ENCODE measurements at regions of chr15 and their contacts with region 1.

Region 1: GRCh38 chr15:38707802-38708671 is 143.4 kb upstream of the RASGRP1 start:
- DNase-seq: peak; percentile 80
- ATAC-seq: peak; percentile 93
- H3K4me3 ChIP-seq: no peak overlapping the region
- H3K27ac ChIP-seq: peak overlapping the region; percentile 74; the same call in 1 of the 2 replicates
- H3K4me1 ChIP-seq: peaks cover 7% of the 10 kb centered on the region
- H3K27me3 ChIP-seq: no peaks in the 10 kb centered on the region
- CTCF ChIP-seq: peak; percentile 82
- POLR2A ChIP-seq: no peak; the same call in 1 of the 2 replicates
- RAD21 ChIP-seq: peak; percentile 95

Region 2: GRCh38 chr15:38743147-38743546 is 35.1 kb after region 1 on chr15:
- CTCF ChIA-PET with region 1: no interaction called
- POLR2A ChIA-PET with region 1: no interaction called
- dilution Hi-C with region 1: no loop called
- in situ Hi-C with region 1: no loop called
- intact Hi-C with region 1: no loop called
- DNase-seq: no peak
- ATAC-seq: no peak
- H3K4me3 ChIP-seq: no peak overlapping the region
- H3K27ac ChIP-seq: no peak overlapping the region
- H3K4me1 ChIP-seq: peaks cover 5% of the 10 kb centered on the region
- H3K27me3 ChIP-seq: no peaks in the 10 kb centered on the region
- CTCF ChIP-seq: no peak
- POLR2A ChIP-seq: no peak
- RAD21 ChIP-seq: no peak

Region 3: DNA sequence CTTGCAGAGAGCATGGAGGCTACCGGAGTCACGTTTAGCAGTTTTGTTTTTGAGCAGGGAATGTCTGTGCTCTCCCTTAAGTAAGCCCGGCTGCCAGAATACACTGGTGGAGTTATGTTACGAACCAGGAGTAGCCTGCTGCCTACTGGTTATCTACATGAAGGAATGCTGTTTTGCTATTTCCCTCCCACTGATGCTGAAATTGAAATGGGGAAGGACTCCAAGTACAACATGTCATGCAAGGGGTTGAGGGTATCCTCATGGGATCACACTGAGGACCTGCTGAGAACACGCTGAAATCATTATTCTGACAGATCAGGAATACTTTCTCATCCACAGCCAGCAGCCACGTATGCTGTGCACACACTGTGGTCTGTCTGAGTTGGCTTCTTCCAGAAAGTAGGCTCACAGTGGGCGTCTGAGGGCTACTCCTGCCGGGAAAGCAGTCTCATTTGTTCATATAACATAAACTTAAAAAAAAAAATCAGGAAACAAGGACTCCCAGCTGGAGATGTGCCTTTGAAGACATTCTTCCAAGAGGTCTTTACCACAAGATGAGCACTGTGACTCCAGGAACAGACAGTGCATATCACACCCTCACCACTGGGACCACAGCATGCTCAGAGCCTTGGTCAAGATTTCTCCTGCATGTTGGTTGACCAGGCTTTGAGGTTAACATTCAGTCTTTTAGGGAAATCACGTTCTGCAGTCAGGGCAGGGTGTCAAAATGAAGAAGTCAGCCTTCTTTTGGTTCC is 157.0 kb after region 1 on chr15:
- CTCF ChIA-PET with region 1: no interaction called
- POLR2A ChIA-PET with region 1: no interaction called
- dilution Hi-C with region 1: no loop called
- in situ Hi-C with region 1: no loop called
- intact Hi-C with region 1: loop called (anchors 1 kb)
- DNase-seq: peak; percentile 83
- ATAC-seq: peak; percentile 85
- H3K4me3 ChIP-seq: no peak overlapping the region
- H3K27ac ChIP-seq: peak overlapping the region; percentile 90
- H3K4me1 ChIP-seq: peaks cover 25% of the 10 kb centered on the region
- H3K27me3 ChIP-seq: no peaks in the 10 kb centered on the region
- CTCF ChIP-seq: no peak
- POLR2A ChIP-seq: no peak
- RAD21 ChIP-seq: peak; percentile 22; the same call in 1 of the 2 replicates

Region 4: DNA sequence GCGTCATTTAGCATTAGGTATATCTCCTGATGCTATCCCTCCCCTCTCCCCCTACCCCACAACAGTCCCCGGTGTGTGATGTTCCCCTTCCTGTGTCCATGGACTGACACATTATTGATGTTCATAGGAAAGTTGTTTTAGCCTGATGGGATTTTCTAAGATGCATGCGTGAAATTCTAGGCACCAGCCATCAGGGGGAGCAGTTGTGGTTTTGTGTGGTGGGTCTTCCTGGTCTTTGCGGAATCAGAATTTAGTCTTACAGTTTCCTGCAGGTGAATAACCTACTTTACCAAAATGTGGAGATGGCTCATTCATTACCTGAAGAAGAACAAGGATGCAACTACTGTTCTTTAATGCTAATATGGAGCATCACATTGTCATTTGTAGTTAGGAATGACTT is 417.9 kb after region 1 on chr15:
- CTCF ChIA-PET with region 1: no interaction called
- POLR2A ChIA-PET with region 1: no interaction called
- dilution Hi-C with region 1: no loop called
- in situ Hi-C with region 1: no loop called
- intact Hi-C with region 1: loop called (anchors 5 kb)
- DNase-seq: peak; percentile 68
- ATAC-seq: no peak
- H3K4me3 ChIP-seq: no peak overlapping the region
- H3K27ac ChIP-seq: peak overlapping the region; percentile 39; the same call in 1 of the 2 replicates
- H3K4me1 ChIP-seq: peaks cover 37% of the 10 kb centered on the region
- H3K27me3 ChIP-seq: no peaks in the 10 kb centered on the region
- CTCF ChIP-seq: peak; percentile 64
- POLR2A ChIP-seq: no peak
- RAD21 ChIP-seq: peak; percentile 62

Region 5: GRCh38 chr15:39362821-39363561 is 655.0 kb after region 1 on chr15:
- CTCF ChIA-PET with region 1: no interaction called
- POLR2A ChIA-PET with region 1: no interaction called
- dilution Hi-C with region 1: no loop called
- in situ Hi-C with region 1: no loop called
- intact Hi-C with region 1: loop called (anchors 5 kb)
- DNase-seq: peak; percentile 96
- ATAC-seq: peak; percentile 61
- H3K4me3 ChIP-seq: no peak overlapping the region
- H3K27ac ChIP-seq: peak overlapping the region; percentile 78; the same call in 1 of the 2 replicates
- H3K4me1 ChIP-seq: peaks cover 16% of the 10 kb centered on the region
- H3K27me3 ChIP-seq: no peaks in the 10 kb centered on the region
- CTCF ChIP-seq: no peak
- POLR2A ChIP-seq: no peak
- RAD21 ChIP-seq: no peak

Region 6: GRCh38 chr15:39472621-39473297 is 764.7 kb after region 1 on chr15:
- CTCF ChIA-PET with region 1: no interaction called
- POLR2A ChIA-PET with region 1: no interaction called
- dilution Hi-C with region 1: no loop called
- in situ Hi-C with region 1: loop called (anchors 5 kb)
- intact Hi-C with region 1: loop called (anchors 5 kb)
- DNase-seq: peak; percentile 99
- ATAC-seq: peak; percentile 93
- H3K4me3 ChIP-seq: no peak overlapping the region
- H3K27ac ChIP-seq: peak overlapping the region; percentile 99; the same call in 1 of the 2 replicates
- H3K4me1 ChIP-seq: peaks cover 15% of the 10 kb centered on the region; the same call in 1 of the 2 replicates
- H3K27me3 ChIP-seq: no peaks in the 10 kb centered on the region
- CTCF ChIP-seq: no peak
- POLR2A ChIP-seq: no peak
- RAD21 ChIP-seq: no peak